T-cell (primary cell): ENCODE measurements at regions of chr3 and their contacts with region 1.

Region 1: GRCh38 chr3:7867587-7867986 is 634.0 kb upstream of the LMCD1 start:
- DNase-seq: no peak
- ATAC-seq: peak in 3 of 4 experiments; percentile 43 to 63 (median 56)
- H3K4me3 ChIP-seq: no peak overlapping the region
- H3K4me3 Mint-ChIP-seq: peak overlapping the region in 1 of 3 donors; percentile 22
- H3K27ac ChIP-seq: peak overlapping the region; percentile 6
- H3K27ac Mint-ChIP-seq: peak overlapping the region; percentile 68 to 71
- H3K4me1 ChIP-seq: peaks cover 3 to 4% of the 10 kb centered on the region in 2 experiments
- H3K4me1 Mint-ChIP-seq: peaks cover 22 to 33% (median 23%) of the 10 kb centered on the region in 3 donors
- H3K27me3 ChIP-seq: no peaks in the 10 kb centered on the region
- H3K27me3 Mint-ChIP-seq: no peaks in the 10 kb centered on the region

Region 2: GRCh38 chr3:7744850-7745249 is 122.7 kb before region 1 on chr3:
- CTCF ChIA-PET with region 1: no interaction called
- POLR2A ChIA-PET with region 1: no interaction called
- DNase-seq: no peak
- ATAC-seq: no peak
- H3K4me3 ChIP-seq: no peak overlapping the region
- H3K4me3 Mint-ChIP-seq: no peak overlapping the region
- H3K27ac ChIP-seq: no peak overlapping the region
- H3K27ac Mint-ChIP-seq: no peak overlapping the region
- H3K4me1 ChIP-seq: no peaks in the 10 kb centered on the region
- H3K4me1 Mint-ChIP-seq: no peaks in the 10 kb centered on the region
- H3K27me3 ChIP-seq: no peaks in the 10 kb centered on the region
- H3K27me3 Mint-ChIP-seq: peaks cover 3 to 5% of the 10 kb centered on the region in 2 donors

Region 3: DNA sequence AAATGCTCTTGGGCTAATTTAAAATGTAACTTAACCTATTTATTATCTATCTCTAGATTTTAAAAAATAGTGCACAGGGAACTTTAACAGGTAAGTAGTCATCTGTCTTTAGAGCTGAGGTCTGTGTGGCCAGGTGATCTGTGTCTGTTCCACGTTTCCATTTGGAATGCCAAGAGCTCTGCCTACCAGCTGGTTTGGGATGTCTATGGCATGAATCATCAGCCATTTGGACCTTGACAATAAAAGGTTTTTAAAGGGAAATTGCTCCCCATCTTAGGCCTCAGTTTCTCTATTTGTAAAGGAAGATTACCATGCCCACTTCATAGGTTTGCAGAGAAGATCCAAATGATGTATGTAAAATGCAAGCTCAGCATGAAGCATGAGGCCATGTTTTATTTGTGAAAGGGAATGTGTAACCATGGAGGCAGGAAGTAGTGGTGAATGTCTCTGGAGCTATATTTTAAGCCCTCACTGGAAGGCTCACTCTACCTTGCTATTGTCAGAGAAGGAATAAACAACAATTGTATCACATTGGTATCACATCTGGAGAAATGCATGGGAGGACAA is 85.9 kb after region 1 on chr3:
- CTCF ChIA-PET with region 1: no interaction called
- POLR2A ChIA-PET with region 1: no interaction called
- DNase-seq: no peak
- ATAC-seq: no peak
- H3K4me3 ChIP-seq: no peak overlapping the region
- H3K4me3 Mint-ChIP-seq: no peak overlapping the region
- H3K27ac ChIP-seq: no peak overlapping the region
- H3K27ac Mint-ChIP-seq: no peak overlapping the region
- H3K4me1 ChIP-seq: no peaks in the 10 kb centered on the region
- H3K4me1 Mint-ChIP-seq: peaks cover 0 to 3% (median 0%) of the 10 kb centered on the region in 3 donors
- H3K27me3 ChIP-seq: no peaks in the 10 kb centered on the region
- H3K27me3 Mint-ChIP-seq: no peaks in the 10 kb centered on the region

Region 4: DNA sequence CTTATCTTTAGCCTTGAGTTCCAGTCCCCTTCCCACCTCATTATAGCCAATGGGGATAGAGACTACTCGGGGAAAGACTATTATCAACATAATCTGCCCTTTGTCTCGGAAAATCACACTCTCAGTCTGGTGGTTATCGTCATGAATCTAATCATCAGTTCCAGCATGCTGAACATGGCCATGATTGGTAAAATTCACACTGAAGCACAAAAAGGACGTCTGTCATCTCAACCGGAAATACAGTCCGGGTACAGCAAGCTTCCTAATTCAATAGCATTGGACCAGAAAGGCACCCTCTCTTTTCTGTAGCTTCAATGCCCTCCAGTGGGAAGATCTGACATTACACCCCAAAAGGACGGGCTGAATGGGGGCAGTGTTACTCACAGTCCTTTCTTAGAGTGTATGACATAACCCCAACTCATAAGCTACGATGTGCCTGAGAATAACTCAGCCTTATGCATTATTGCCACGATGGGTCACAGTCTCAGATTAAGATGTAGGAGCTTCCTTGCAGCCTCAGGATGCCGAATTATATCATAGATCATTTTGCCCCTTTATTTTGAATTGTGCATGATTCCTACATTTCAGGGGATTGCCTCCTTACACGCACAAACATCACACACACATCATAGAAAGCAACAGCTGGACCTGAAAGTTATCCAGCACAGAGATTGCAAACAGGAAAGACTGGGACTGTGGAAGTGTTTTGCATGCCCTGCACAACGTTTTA is 243.6 kb after region 1 on chr3:
- CTCF ChIA-PET with region 1: interaction called in 1 of 2 experiments, 12 read pairs
- POLR2A ChIA-PET with region 1: no interaction called
- DNase-seq: peak; percentile 2 to 63 (median 30)
- ATAC-seq: peak; percentile 70 to 88 (median 78)
- H3K4me3 ChIP-seq: no peak overlapping the region
- H3K4me3 Mint-ChIP-seq: peak overlapping the region; percentile 32 to 42 (median 36)
- H3K27ac ChIP-seq: no peak overlapping the region
- H3K27ac Mint-ChIP-seq: no peak overlapping the region
- H3K4me1 ChIP-seq: peaks cover 2 to 4% of the 10 kb centered on the region in 2 experiments
- H3K4me1 Mint-ChIP-seq: peaks cover 4 to 8% (median 5%) of the 10 kb centered on the region in 3 donors
- H3K27me3 ChIP-seq: no peaks in the 10 kb centered on the region
- H3K27me3 Mint-ChIP-seq: peaks cover 0 to 15% of the 10 kb centered on the region in 2 donors